Natural killer cell (primary cell): ENCODE measurements at regions of chr18 and their contacts with region 1.

Region 1: DNA sequence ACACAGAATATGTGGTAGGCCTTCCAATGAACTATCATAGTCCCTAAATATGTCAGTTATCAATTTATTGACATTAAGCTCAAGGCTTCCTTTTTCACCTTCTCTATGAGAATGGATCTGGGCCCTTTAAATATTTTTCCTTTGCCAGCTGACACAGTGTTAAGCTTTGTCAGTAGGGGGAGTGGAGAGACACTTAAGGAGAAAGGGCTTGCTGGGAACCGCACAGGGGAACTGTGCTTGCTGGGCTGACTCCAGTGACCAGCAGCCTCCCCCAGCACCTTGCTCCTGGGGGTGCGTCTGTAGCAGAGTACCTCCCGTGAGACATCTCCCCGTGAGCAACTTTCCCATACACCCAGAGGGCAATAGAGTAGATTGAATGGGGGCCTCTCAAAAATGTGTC is 6.5 kb upstream of the PTPN2 start:
- DNase-seq: no peak
- ATAC-seq: no peak
- H3K4me3 ChIP-seq: no peak overlapping the region
- H3K4me3 Mint-ChIP-seq: no peak overlapping the region
- H3K27ac ChIP-seq: no peak overlapping the region
- H3K27ac Mint-ChIP-seq: no peak overlapping the region
- H3K4me1 ChIP-seq: no peaks in the 10 kb centered on the region
- H3K4me1 Mint-ChIP-seq: peaks cover 8 to 15% of the 10 kb centered on the region in 2 donors
- H3K27me3 ChIP-seq: no peaks in the 10 kb centered on the region
- H3K27me3 Mint-ChIP-seq: peaks cover 0 to 7% of the 10 kb centered on the region in 2 donors
- CTCF ChIP-seq: no peak

Region 2: DNA sequence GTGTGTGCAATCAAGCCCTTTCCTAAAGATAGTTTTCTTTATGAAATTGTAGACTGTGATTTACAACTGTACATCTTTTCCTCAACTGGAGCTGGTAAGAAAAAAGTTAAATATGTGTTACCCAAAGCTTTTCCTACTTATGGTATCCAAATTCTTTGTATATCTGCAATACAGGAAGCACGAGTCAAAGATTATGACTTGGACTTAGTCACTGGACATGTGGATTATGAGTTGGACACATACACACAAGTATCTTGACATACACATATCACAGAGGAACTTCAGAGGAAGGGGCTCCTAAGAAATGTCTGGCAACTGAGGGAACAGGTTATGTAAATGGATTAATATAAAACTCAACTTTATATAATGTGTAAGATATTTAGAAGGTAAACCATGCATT is 447.6 kb before region 1 on chr18:
- intact Hi-C with region 1: no loop called
- DNase-seq: no peak
- ATAC-seq: no peak
- H3K4me3 ChIP-seq: no peak overlapping the region
- H3K4me3 Mint-ChIP-seq: no peak overlapping the region
- H3K27ac ChIP-seq: no peak overlapping the region
- H3K27ac Mint-ChIP-seq: no peak overlapping the region
- H3K4me1 ChIP-seq: no peaks in the 10 kb centered on the region
- H3K4me1 Mint-ChIP-seq: no peaks in the 10 kb centered on the region
- H3K27me3 ChIP-seq: no peaks in the 10 kb centered on the region
- H3K27me3 Mint-ChIP-seq: peaks cover 0 to 2% of the 10 kb centered on the region in 2 donors
- CTCF ChIP-seq: no peak

Region 3: DNA sequence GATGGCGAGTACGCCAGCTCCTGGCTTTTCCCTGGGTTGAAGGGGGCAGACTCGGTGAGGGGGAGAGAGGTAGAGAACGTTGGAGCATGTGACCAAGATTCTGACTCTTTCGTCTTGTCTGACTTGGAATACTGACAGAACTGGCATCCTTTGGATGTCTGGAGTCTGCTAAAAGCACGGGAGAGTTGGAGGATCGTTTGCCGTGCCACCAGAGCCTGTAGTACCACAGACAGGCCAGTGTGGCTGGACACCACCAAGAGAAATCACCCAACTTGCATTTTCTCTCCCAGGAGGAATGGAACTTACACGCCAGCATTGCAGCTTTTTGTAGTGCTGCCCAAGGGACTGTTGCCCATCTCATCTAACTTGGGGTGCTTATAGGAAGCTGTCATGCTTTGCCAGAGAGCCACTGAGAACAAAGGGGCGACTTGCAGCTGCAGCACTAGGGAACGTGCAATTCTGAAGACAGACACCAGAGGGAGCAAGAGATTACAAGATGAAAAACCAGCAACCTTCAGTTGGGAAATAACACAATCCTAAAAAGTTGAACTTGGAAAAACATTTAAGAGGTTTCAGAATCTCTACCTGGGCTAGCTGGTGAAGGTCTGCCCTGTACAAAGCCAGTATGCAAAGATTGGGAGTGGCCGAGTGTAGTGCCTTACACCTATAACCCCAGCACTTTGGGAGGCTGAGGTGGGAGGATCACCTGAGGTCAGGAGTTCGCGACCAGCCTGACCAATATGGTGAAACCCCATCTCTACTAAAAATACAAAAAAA is 163.5 kb before region 1 on chr18:
- intact Hi-C with region 1: loop called (anchors 5 kb)
- DNase-seq: peak; percentile 33 to 84
- ATAC-seq: peak; percentile 69 to 82 (median 78)
- H3K4me3 ChIP-seq: no peak overlapping the region
- H3K4me3 Mint-ChIP-seq: no peak overlapping the region
- H3K27ac ChIP-seq: no peak overlapping the region
- H3K27ac Mint-ChIP-seq: peak overlapping the region in 1 of 2 donors; percentile 7
- H3K4me1 ChIP-seq: no peaks in the 10 kb centered on the region
- H3K4me1 Mint-ChIP-seq: peaks cover 4 to 5% of the 10 kb centered on the region in 2 donors
- H3K27me3 ChIP-seq: no peaks in the 10 kb centered on the region
- H3K27me3 Mint-ChIP-seq: no peaks in the 10 kb centered on the region
- CTCF ChIP-seq: peak; percentile 91

Region 4: DNA sequence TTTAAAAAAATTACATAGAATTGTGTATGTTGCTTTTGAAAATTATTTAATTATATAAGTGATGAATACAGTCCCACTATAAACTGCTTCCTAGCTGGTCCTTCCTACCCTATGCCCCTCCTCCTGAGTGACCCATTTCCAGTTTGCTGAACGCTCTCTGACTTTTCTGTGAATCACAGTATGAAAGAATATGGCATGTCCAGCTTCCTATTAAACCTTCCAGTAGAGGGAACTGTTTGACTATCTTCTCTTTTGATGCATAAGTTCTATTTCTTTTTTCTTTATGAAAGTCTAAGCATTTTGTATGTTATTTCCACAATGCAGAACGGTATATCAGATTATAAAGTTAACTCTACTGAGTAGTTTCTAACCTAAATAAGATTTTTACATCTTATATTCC is 146.4 kb before region 1 on chr18:
- intact Hi-C with region 1: loop called (anchors 1 kb)
- DNase-seq: peak in 1 of 2 donors; percentile 68
- ATAC-seq: peak; percentile 56 to 88 (median 73)
- H3K4me3 ChIP-seq: no peak overlapping the region
- H3K4me3 Mint-ChIP-seq: no peak overlapping the region
- H3K27ac ChIP-seq: no peak overlapping the region
- H3K27ac Mint-ChIP-seq: no peak overlapping the region
- H3K4me1 ChIP-seq: no peaks in the 10 kb centered on the region
- H3K4me1 Mint-ChIP-seq: peaks cover 0 to 1% of the 10 kb centered on the region in 2 donors
- H3K27me3 ChIP-seq: no peaks in the 10 kb centered on the region
- H3K27me3 Mint-ChIP-seq: peaks cover 0 to under 1% of the 10 kb centered on the region in 2 donors
- CTCF ChIP-seq: peak; percentile 67

Region 5: GRCh38 chr18:12934454-12935071 is 44.1 kb after region 1 on chr18:
- intact Hi-C with region 1: loop called (anchors 1 kb)
- DNase-seq: peak; percentile 76 to 91
- ATAC-seq: peak; percentile 82 to 89 (median 86)
- H3K4me3 ChIP-seq: no peak overlapping the region
- H3K4me3 Mint-ChIP-seq: peak overlapping the region; percentile 7
- H3K27ac ChIP-seq: no peak overlapping the region
- H3K27ac Mint-ChIP-seq: peak overlapping the region in 1 of 2 donors; percentile 7
- H3K4me1 ChIP-seq: peaks cover 16% of the 10 kb centered on the region
- H3K4me1 Mint-ChIP-seq: peaks cover 19 to 27% of the 10 kb centered on the region in 2 donors
- H3K27me3 ChIP-seq: no peaks in the 10 kb centered on the region
- H3K27me3 Mint-ChIP-seq: peaks cover 38 to 47% of the 10 kb centered on the region in 2 donors
- CTCF ChIP-seq: peak; percentile 97

Region 6: DNA sequence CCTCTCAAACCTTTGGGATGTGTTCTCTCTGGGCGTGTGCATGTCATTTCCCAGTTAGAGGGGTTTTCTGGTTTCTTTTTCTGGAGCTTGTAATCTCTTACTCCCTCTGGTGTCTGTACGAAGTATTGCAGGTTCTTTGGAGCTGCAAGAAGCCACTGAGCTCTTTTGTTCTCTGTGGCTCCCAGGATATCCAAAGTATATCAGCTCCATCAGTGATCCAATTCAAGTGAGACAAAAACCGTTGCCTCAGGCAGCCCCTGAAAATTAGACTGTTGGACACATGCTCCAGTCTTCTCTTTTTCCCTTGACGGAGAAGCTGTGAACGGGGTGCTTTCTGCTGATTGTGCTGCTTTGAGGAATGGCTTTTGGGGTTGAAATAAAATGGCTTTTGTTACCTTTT is 269.1 kb after region 1 on chr18:
- intact Hi-C with region 1: loop called (anchors 5 kb)
- DNase-seq: peak in 1 of 2 donors; percentile 80
- ATAC-seq: peak; percentile 75 to 81 (median 76)
- H3K4me3 ChIP-seq: no peak overlapping the region
- H3K4me3 Mint-ChIP-seq: no peak overlapping the region
- H3K27ac ChIP-seq: no peak overlapping the region
- H3K27ac Mint-ChIP-seq: no peak overlapping the region
- H3K4me1 ChIP-seq: no peaks in the 10 kb centered on the region
- H3K4me1 Mint-ChIP-seq: peaks cover 6 to 7% of the 10 kb centered on the region in 2 donors
- H3K27me3 ChIP-seq: no peaks in the 10 kb centered on the region
- H3K27me3 Mint-ChIP-seq: peaks cover 12 to 18% of the 10 kb centered on the region in 2 donors
- CTCF ChIP-seq: peak; percentile 80